ENCODE measurements at regions of chr15 and their contacts with region 1.

Region 1: DNA sequence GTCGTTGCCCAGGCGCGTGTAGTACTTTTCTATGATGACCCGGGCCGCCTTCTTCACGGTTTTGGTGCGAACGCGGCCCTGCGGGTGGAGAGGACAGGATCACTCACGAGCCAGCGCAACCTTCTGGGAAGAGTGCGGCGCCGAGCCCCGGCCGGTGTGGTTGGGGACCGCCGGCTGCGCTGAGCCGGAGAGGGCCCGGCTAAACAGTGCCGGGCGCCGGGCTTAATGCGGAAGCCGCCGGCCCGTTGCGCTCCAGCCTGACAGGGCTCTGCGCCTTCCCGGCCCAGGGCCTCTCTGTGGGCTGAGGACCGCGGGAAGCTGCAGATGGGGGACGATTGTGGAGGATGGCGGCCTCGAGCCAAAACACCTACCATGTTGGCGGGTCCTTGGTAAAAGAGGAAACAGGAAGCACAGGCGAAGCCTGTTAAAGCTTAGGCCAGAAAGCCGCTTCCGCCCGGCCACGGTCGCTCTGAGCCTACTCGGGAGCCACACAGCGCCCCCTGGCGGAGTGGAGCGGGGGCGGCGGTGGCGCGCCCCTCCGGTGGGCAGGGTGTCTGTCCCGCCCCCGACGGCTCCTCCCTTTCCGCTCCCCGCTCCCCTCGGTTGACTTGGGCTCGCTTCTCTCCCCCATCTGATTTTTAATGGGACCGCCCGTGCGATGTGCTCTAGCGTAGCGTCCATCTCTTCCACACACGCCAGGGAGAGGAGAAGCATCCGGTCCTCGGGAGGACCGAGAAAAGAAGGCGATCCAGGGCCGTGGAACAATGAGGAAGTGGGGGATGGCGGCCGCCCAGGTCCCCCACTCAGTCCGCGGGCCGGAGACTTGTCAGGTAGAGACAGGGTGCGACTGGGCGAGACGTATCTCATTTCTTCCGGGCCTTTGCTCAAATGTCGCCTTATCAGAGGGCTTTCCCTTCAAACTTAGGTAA is at the start of gene RPS17:
- DNase-seq: peak; percentile 98 to 99 (median 98)
- H3K4me3 ChIP-seq: peak within 1 kb of the TSS; percentile 96
- H3K4me3 Mint-ChIP-seq: peak within 1 kb of the TSS; percentile 94 to 98 (median 96)
- H3K27ac ChIP-seq: peak within 1 kb of the TSS; percentile 94
- H3K27ac Mint-ChIP-seq: peak within 1 kb of the TSS; percentile 92 to 98 (median 96)
- H3K4me1 ChIP-seq: peaks cover 25% of the 10 kb centered on the region
- H3K4me1 Mint-ChIP-seq: peaks cover 26 to 46% (median 34%) of the 10 kb centered on the region in 3 donors
- H3K27me3 ChIP-seq: no peaks in the 10 kb centered on the region
- H3K27me3 Mint-ChIP-seq: peaks cover 0 to 5% of the 10 kb centered on the region in 2 donors
- total RNA-seq, gene RPS17: 2,610 to 2,630 TPM

Region 2: DNA sequence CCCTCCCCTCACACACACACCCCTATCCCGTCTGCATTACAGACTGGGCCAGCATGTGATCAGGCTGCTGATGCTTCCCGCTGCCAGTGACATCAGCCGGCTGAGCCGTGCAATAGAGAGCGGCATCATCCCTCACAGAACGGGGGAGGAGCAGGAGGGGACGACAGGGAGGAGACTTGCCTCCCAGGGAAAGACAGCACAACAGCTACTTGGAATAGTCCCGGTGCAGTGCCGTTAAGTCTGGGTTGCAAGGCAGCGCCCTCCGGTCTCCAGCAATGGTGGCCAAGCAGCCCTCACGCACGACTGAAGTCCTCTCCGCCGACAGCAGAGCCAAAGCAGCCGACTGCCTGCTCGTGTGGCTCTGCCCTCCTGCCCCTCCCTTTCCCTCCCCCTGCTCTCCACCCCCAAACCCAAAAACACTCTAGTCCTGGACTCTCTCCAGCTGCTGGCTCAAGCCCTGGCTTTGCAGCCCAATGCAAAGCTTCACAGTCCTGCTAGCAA is 31.5 kb after region 1 on chr15:
- CTCF ChIA-PET with region 1: no interaction called
- POLR2A ChIA-PET with region 1: no interaction called
- DNase-seq: no peak
- H3K4me3 ChIP-seq: no peak overlapping the region
- H3K4me3 Mint-ChIP-seq: no peak overlapping the region
- H3K27ac ChIP-seq: no peak overlapping the region
- H3K27ac Mint-ChIP-seq: peak overlapping the region in 2 of 8 donors; percentile 12 to 30
- H3K4me1 ChIP-seq: no peaks in the 10 kb centered on the region
- H3K4me1 Mint-ChIP-seq: no peaks in the 10 kb centered on the region
- H3K27me3 ChIP-seq: peaks cover 3% of the 10 kb centered on the region
- H3K27me3 Mint-ChIP-seq: peaks cover 3 to 39% of the 10 kb centered on the region in 2 donors

Region 3: GRCh38 chr15:82641129-82641798 is 100.9 kb after region 1 on chr15:
- CTCF ChIA-PET with region 1: no interaction called
- POLR2A ChIA-PET with region 1: no interaction called
- DNase-seq: no peak
- H3K4me3 ChIP-seq: no peak overlapping the region
- H3K4me3 Mint-ChIP-seq: no peak overlapping the region
- H3K27ac ChIP-seq: no peak overlapping the region
- H3K27ac Mint-ChIP-seq: no peak overlapping the region
- H3K4me1 ChIP-seq: no peaks in the 10 kb centered on the region
- H3K4me1 Mint-ChIP-seq: peaks cover 3 to 4% (median 3%) of the 10 kb centered on the region in 3 donors
- H3K27me3 ChIP-seq: peaks cover 5% of the 10 kb centered on the region
- H3K27me3 Mint-ChIP-seq: peaks cover 39 to 80% of the 10 kb centered on the region in 2 donors

Region 4: GRCh38 chr15:82680200-82681102 is 140.1 kb after region 1 on chr15:
- CTCF ChIA-PET with region 1: interaction called, 11 read pairs
- POLR2A ChIA-PET with region 1: interaction called, 4 read pairs
- DNase-seq: peak; percentile 60 to 89 (median 80)
- H3K4me3 ChIP-seq: peak overlapping the region; percentile 65
- H3K4me3 Mint-ChIP-seq: peak overlapping the region; percentile 90 to 95 (median 91)
- H3K27ac ChIP-seq: peak overlapping the region; percentile 71
- H3K27ac Mint-ChIP-seq: peak overlapping the region; percentile 85 to 98 (median 91)
- H3K4me1 ChIP-seq: peaks cover 8% of the 10 kb centered on the region
- H3K4me1 Mint-ChIP-seq: peaks cover 9 to 15% (median 14%) of the 10 kb centered on the region in 3 donors
- H3K27me3 ChIP-seq: no peaks in the 10 kb centered on the region
- H3K27me3 Mint-ChIP-seq: peaks cover 0 to 8% of the 10 kb centered on the region in 2 donors

Region 5: DNA sequence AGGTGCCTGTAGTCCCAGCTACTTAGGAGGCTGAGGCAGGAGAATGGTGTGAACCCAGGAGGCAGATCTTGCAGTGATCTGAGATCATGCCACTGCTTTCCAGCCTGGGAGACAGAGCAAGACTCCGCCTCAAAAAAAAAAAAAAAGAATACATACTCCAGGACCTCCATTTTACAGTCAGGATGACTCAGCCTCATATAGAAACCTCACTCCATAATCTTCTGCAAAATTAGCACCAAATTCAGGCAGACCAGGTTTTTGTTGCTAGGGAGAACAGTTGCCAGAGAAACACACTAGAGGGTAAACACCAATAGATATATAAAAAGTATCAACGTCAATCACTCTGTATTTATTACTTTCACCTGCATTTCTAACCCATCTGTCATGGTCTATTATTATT is 197.7 kb after region 1 on chr15:
- CTCF ChIA-PET with region 1: no interaction called
- POLR2A ChIA-PET with region 1: no interaction called
- DNase-seq: no peak
- H3K4me3 ChIP-seq: no peak overlapping the region
- H3K4me3 Mint-ChIP-seq: no peak overlapping the region
- H3K27ac ChIP-seq: no peak overlapping the region
- H3K27ac Mint-ChIP-seq: peak overlapping the region in 1 of 8 donors; percentile 37
- H3K4me1 ChIP-seq: no peaks in the 10 kb centered on the region
- H3K4me1 Mint-ChIP-seq: peaks cover 0 to 4% (median 0%) of the 10 kb centered on the region in 3 donors
- H3K27me3 ChIP-seq: no peaks in the 10 kb centered on the region
- H3K27me3 Mint-ChIP-seq: no peaks in the 10 kb centered on the region

Region 6: GRCh38 chr15:82809404-82810060 is 269.2 kb after region 1 on chr15 and contains the start of gene WHAMM:
- CTCF ChIA-PET with region 1: interaction called, 11 read pairs
- POLR2A ChIA-PET with region 1: interaction called, 17 read pairs
- DNase-seq: peak; percentile 93 to 98 (median 96)
- H3K4me3 ChIP-seq: peak within 1 kb of the TSS; percentile 68
- H3K4me3 Mint-ChIP-seq: peak within 1 kb of the TSS; percentile 88 to 96 (median 95)
- H3K27ac ChIP-seq: peak within 1 kb of the TSS; percentile 91
- H3K27ac Mint-ChIP-seq: peak within 1 kb of the TSS; percentile 93 to 100 (median 98)
- H3K4me1 ChIP-seq: peaks cover 27% of the 10 kb centered on the region
- H3K4me1 Mint-ChIP-seq: peaks cover 34 to 39% (median 38%) of the 10 kb centered on the region in 3 donors
- H3K27me3 ChIP-seq: no peaks in the 10 kb centered on the region
- H3K27me3 Mint-ChIP-seq: peaks cover 0 to 3% of the 10 kb centered on the region in 2 donors
- total RNA-seq, gene WHAMM: 9.3 to 9.7 TPM

Region 7: DNA sequence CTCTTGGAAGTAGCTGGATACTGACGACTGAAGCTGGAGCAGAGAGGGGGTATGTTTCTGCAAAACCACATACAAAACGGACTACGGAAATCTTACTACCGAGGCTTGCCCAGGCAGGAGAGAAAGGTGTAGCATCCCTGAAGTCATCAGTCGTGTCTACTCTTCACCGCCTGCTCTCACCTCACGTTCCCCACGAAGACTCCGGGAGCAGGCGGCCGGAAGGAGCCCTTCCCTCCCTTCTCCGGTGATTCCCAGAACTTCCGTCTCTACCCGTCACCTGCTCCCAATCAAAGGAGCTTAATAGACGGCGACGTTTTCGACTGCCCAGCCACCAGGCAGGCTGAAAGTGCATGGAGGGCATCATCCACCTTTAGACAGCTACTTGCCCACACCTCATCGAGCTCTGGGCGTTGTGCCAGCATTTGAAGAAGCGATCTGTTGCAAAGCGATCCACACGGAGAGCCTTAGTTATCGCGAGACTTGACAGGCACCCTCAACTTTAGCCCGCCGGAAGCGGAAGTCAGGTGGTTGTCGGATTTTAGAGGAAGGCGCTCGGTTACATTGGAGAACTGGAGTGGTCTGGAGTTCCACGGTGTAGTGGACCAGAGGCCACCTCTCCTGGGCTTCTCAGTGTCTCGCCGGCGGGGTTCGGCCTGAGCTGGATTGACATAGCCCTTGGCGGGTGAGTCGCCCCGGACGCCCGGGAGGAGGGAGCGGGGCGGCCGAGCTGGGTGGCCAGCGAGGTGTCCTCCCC is 445.5 kb after region 1 on chr15 and contains the start of gene RAMAC:
- CTCF ChIA-PET with region 1: interaction called, 3 read pairs
- POLR2A ChIA-PET with region 1: interaction called, 19 read pairs
- DNase-seq: peak; percentile 87 to 97 (median 91)
- H3K4me3 ChIP-seq: peak within 1 kb of the TSS; percentile 79
- H3K4me3 Mint-ChIP-seq: peak within 1 kb of the TSS; percentile 93 to 99 (median 99)
- H3K27ac ChIP-seq: peak within 1 kb of the TSS; percentile 66
- H3K27ac Mint-ChIP-seq: peak within 1 kb of the TSS; percentile 44 to 99 (median 96)
- H3K4me1 ChIP-seq: peaks cover 22% of the 10 kb centered on the region
- H3K4me1 Mint-ChIP-seq: peaks cover 26 to 39% (median 34%) of the 10 kb centered on the region in 3 donors
- H3K27me3 ChIP-seq: no peaks in the 10 kb centered on the region
- H3K27me3 Mint-ChIP-seq: peaks cover 0 to 5% of the 10 kb centered on the region in 2 donors
- total RNA-seq, gene RAMAC: 27.7 to 29.6 TPM

Region 8: GRCh38 chr15:82999905-83000671 is 459.8 kb after region 1 on chr15:
- CTCF ChIA-PET with region 1: interaction called, 27 read pairs
- POLR2A ChIA-PET with region 1: no interaction called
- DNase-seq: peak in 2 of 5 donors; percentile 45 to 53
- H3K4me3 ChIP-seq: peak overlapping the region; percentile 53
- H3K4me3 Mint-ChIP-seq: peak overlapping the region; percentile 24 to 85 (median 75)
- H3K27ac ChIP-seq: no peak overlapping the region
- H3K27ac Mint-ChIP-seq: peak overlapping the region; percentile 67 to 89 (median 85)
- H3K4me1 ChIP-seq: peaks cover 9% of the 10 kb centered on the region
- H3K4me1 Mint-ChIP-seq: peaks cover 7 to 13% (median 8%) of the 10 kb centered on the region in 3 donors
- H3K27me3 ChIP-seq: no peaks in the 10 kb centered on the region
- H3K27me3 Mint-ChIP-seq: peaks cover 0 to 2% of the 10 kb centered on the region in 2 donors

Region 9: GRCh38 chr15:83011271-83012075 is 471.2 kb after region 1 on chr15 and contains the start of gene C15orf40:
- CTCF ChIA-PET with region 1: interaction called, 10 read pairs
- POLR2A ChIA-PET with region 1: interaction called, 9 read pairs
- DNase-seq: peak; percentile 78 to 84 (median 83)
- H3K4me3 ChIP-seq: peak within 1 kb of the TSS; percentile 93
- H3K4me3 Mint-ChIP-seq: peak within 1 kb of the TSS; percentile 88 to 100 (median 97)
- H3K27ac ChIP-seq: peak within 1 kb of the TSS; percentile 84
- H3K27ac Mint-ChIP-seq: peak within 1 kb of the TSS; percentile 59 to 97 (median 96)
- H3K4me1 ChIP-seq: peaks cover 31% of the 10 kb centered on the region
- H3K4me1 Mint-ChIP-seq: peaks cover 46 to 62% (median 58%) of the 10 kb centered on the region in 3 donors
- H3K27me3 ChIP-seq: no peaks in the 10 kb centered on the region
- H3K27me3 Mint-ChIP-seq: peaks cover 0 to 1% of the 10 kb centered on the region in 2 donors
- total RNA-seq, gene C15orf40: 34.2 to 36.6 TPM

Region 10: GRCh38 chr15:83504365-83504764 is 964.0 kb after region 1 on chr15:
- CTCF ChIA-PET with region 1: no interaction called
- POLR2A ChIA-PET with region 1: no interaction called
- DNase-seq: no peak
- H3K4me3 ChIP-seq: no peak overlapping the region
- H3K4me3 Mint-ChIP-seq: no peak overlapping the region
- H3K27ac ChIP-seq: no peak overlapping the region
- H3K27ac Mint-ChIP-seq: no peak overlapping the region
- H3K4me1 ChIP-seq: no peaks in the 10 kb centered on the region
- H3K4me1 Mint-ChIP-seq: no peaks in the 10 kb centered on the region
- H3K27me3 ChIP-seq: no peaks in the 10 kb centered on the region
- H3K27me3 Mint-ChIP-seq: peaks cover 0 to 1% of the 10 kb centered on the region in 2 donors